ENCODE measurements at regions of chr6 and their contacts with region 1.

Region 1: DNA sequence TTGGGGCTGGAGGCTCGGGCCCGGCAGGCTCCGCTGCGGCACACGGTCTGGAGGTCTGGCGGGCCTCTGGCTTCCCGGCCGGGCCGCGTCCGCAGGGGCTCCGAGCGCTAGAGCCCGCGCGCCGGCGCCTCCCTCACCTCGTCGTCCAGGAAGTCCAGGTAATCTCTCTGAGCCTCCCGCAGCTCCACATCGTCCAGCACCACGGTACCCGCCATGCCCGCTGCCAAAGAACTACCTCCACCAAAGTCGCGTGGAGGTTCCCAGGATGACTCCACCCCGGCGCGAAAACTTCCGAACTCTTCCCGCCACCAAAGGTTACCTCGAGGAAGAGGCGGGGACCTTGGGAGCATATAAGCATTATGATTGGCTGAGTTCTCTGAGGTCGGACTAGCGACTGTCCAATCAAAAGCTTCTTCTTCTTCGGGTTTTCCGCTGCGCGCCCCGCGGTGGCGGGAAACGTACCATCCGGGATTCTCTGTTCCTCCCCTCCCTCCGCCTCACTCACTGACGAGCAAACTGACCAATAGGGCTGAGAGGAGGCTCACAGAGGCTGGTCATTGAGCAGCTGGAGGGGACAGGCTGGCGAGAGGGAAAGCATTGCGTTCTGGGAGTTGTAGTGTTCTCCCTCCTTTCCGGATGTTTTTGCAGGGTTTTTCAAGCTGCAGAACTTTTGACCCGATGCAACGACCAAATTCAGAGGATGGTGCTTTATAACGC is at the start of gene MCM3:
- DNase-seq: peak; percentile 98 to 99 (median 99)
- H3K4me3 ChIP-seq: peak within 1 kb of the TSS; percentile 59 to 97 (median 89)
- H3K27ac ChIP-seq: peak within 1 kb of the TSS; percentile 36 to 77
- H3K4me1 ChIP-seq: peaks cover 8 to 39% (median 24%) of the 10 kb centered on the region in 4 experiments
- H3K27me3 ChIP-seq: no peaks in the 10 kb centered on the region

Region 2: GRCh38 chr6:52263709-52264540 is 20.7 kb before region 1 on chr6:
- CTCF ChIA-PET with region 1: interaction called, 14 read pairs
- POLR2A ChIA-PET with region 1: no interaction called
- DNase-seq: peak; percentile 64 to 87 (median 83)
- H3K4me3 ChIP-seq: no peak overlapping the region
- H3K27ac ChIP-seq: no peak overlapping the region
- H3K4me1 ChIP-seq: peaks cover 0 to 11% (median 4%) of the 10 kb centered on the region in 4 experiments
- H3K27me3 ChIP-seq: no peaks in the 10 kb centered on the region

Region 3: GRCh38 chr6:52304983-52305390 is 20.4 kb after region 1 on chr6:
- CTCF ChIA-PET with region 1: interaction called, 48 read pairs
- POLR2A ChIA-PET with region 1: interaction called, 3 read pairs
- DNase-seq: peak in 2 of 3 donors; percentile 65 to 81
- H3K4me3 ChIP-seq: peak overlapping the region in 1 of 7 experiments; percentile 32
- H3K27ac ChIP-seq: peak overlapping the region in 1 of 2 experiments; percentile 68
- H3K4me1 ChIP-seq: peaks cover 18 to 55% (median 42%) of the 10 kb centered on the region in 4 experiments
- H3K27me3 ChIP-seq: no peaks in the 10 kb centered on the region

Region 4: GRCh38 chr6:52389626-52390360 is 105.2 kb after region 1 on chr6:
- CTCF ChIA-PET with region 1: interaction called, 13 read pairs
- POLR2A ChIA-PET with region 1: no interaction called
- DNase-seq: peak; percentile 52 to 79 (median 70)
- H3K4me3 ChIP-seq: peak overlapping the region in 5 of 7 experiments; percentile 30 to 59 (median 46)
- H3K27ac ChIP-seq: peak overlapping the region; percentile 70 to 81
- H3K4me1 ChIP-seq: peaks cover 13 to 35% (median 27%) of the 10 kb centered on the region in 4 experiments
- H3K27me3 ChIP-seq: no peaks in the 10 kb centered on the region

Region 5: DNA sequence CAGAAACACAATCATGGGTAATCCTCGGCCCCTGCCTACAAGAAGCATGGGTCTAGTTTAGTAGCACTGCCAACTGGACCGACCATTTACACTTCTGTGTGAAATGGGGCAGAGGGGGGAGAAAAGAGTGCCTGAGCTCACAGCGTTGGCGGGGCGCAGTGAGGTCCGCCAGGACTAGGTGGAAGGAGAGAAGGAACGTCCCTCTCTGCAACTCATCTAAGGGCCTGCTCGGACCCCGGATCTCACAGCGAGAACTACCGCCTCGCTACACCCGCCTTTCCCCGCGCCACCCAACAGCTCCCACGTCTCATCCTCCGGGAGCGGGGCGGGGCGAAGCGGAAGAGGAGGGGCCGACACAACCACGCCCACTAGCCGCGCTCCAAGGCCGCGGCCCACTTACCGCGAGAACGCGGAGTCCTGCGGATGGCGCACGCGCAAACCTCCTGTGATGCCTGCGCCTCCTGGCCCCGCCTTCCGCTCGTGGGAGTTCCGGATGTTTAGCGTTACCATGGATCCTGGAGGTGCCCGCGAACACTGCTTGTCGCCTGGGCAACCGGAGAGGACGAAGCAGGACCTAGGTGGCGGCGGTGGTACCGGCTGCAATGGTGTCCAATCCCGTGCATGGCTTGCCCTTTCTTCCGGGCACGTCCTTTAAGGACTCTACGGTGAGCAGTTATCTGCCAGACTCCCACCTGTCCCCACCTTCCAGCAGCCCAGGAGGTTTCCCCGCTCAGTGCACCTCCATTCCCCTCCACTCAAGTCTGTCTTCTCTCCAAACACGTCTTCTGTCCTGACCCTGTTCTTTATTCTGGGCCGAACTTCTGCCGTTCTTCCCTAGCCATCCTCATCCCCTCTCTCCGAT is 135.4 kb after region 1 on chr6 and contains the start of gene EFHC1:
- CTCF ChIA-PET with region 1: interaction called, 12 read pairs
- POLR2A ChIA-PET with region 1: no interaction called
- DNase-seq: peak; percentile 97 to 98 (median 97)
- H3K4me3 ChIP-seq: peak within 1 kb of the TSS; percentile 76 to 99 (median 87)
- H3K27ac ChIP-seq: peak within 1 kb of the TSS; percentile 69 to 91
- H3K4me1 ChIP-seq: peaks cover 12 to 55% (median 29%) of the 10 kb centered on the region in 4 experiments
- H3K27me3 ChIP-seq: no peaks in the 10 kb centered on the region

Measured in common myeloid progenitor, CD34-positive (primary cell).